Breast epithelium (tissue), 4 donors: ENCODE measurements at regions of chr21 and their contacts with region 1.

Region 1: GRCh38 chr21:31592963-31593560 is 66.4 kb upstream of the SOD1 start:
- DNase-seq: no peak
- H3K4me3 ChIP-seq: no peak overlapping the region
- H3K27ac ChIP-seq: no peak overlapping the region
- H3K4me1 ChIP-seq: no peaks in the 10 kb centered on the region
- H3K27me3 ChIP-seq: no peaks in the 10 kb centered on the region
- CTCF ChIP-seq: no peak
- POLR2A ChIP-seq: no peak

Region 2: GRCh38 chr21:31201548-31201947 is 391.5 kb before region 1 on chr21:
- intact Hi-C with region 1: loop called (anchors 10 kb)
- DNase-seq: no peak
- H3K4me3 ChIP-seq: no peak overlapping the region
- H3K27ac ChIP-seq: no peak overlapping the region
- H3K4me1 ChIP-seq: no peaks in the 10 kb centered on the region
- H3K27me3 ChIP-seq: no peaks in the 10 kb centered on the region
- CTCF ChIP-seq: no peak
- POLR2A ChIP-seq: no peak